ENCODE measurements at regions of chr5 and their contacts with region 1.

Region 1: GRCh38 chr5:33969572-33970452 is 14.7 kb downstream of the SLC45A2 start:
- DNase-seq: peak; percentile 71
- CTCF ChIP-seq: peak; percentile 91

Region 2: DNA sequence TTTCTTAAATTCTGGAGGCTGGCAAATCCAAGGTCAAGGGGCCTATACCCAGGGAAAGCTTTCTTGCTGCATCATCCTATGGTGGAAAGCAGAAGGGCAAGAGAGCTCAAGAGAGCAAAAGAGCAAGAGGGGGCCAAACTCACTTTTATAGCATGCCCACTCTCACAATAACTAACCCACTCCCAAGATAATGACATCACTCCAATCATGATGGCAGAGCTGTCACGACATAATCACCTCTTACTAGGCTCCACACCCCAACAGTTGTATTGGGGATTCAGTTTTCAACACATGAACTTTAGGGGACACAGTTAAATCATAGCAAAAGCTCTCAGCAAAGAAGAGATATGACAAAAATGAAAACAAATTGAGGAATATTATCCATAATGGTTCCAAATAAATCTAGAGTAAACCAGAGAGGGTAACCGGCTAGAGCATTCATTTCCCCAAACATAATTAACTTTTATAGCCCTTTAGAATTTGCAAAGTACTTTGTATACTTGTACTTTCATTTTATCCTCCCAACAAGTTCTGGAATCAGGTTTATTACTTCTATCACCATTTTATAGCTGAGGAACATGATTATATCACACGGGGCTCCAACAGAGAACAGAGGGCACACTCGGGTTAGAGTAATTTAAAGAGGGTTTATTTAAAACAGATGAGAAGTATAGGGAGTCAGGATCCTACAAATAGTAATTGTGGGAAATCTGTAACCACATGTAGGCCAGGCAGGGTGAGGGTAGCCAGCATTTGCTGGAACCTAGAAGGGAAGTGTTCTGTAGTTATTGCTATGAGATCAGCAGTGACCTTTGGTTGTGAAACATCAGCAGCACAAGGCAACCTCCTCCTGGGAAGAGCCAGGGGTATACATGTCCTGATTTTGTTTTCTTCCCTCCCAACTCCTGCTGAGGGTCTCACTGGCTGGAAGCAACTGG is 536.2 kb before region 1 on chr5:
- CTCF ChIA-PET with region 1: interaction called, 37 read pairs
- POLR2A ChIA-PET with region 1: no interaction called
- DNase-seq: no peak
- CTCF ChIP-seq: no peak

Region 3: DNA sequence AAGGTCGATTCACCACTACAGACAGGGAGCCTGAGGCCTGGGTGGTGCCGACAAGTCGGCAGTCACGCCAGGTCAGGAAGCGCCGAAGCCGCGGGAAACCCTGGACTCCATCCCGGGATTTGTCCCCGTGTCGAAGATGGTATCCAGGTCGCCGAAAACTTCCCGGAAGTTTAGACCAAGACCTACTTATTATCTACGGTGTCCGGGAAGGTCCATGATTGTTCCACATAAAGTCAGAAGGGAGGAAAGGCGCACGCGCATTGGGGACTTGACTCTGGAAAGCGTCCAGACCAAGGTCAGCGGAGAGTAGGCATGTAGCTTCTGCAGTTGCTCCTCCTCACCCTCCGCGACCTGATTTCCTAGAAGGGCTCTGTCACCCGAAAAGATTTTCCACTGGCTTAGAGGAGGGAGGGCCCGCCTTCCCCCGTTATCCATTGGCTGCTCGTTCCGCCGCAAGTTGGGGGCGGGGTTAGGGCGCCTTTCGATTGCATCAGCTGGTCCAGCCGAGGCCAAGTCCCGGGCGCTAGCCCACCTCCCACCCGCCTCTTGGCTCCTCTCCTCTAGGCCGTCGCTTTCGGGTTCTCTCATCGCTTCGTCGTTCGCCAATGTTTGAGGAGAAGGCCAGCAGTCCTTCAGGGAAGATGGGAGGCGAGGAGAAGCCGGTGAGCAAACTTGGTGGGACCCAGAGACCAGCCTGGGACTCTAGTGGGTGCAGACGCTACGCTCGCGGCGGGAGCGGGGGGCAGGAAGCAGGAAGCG is 529.2 kb before region 1 on chr5 and contains the start of gene TARS1:
- CTCF ChIA-PET with region 1: interaction called, 37 read pairs
- POLR2A ChIA-PET with region 1: no interaction called
- DNase-seq: peak; percentile 96
- CTCF ChIP-seq: no peak

Region 4: DNA sequence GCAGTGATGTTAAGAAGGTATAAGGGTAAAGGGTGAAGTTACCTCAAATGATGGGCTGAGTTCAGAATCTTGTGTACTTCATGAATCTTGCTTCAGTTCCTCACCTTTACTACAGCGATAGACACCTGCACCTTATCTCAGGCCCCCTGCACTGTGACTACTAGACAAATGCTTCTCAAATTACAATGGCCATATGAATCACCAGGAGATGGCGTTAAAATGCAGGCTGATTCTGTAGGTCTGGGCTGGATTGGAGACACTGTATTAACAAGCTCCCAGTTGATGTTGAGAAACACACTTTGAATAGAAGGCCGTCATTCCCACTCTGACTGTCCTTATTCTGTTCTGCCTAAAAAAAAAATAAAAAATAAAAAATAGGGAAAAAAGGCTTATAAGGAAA is 499.3 kb before region 1 on chr5:
- CTCF ChIA-PET with region 1: interaction called, 12 read pairs
- POLR2A ChIA-PET with region 1: no interaction called
- DNase-seq: no peak
- CTCF ChIP-seq: peak; percentile 43

Region 5: DNA sequence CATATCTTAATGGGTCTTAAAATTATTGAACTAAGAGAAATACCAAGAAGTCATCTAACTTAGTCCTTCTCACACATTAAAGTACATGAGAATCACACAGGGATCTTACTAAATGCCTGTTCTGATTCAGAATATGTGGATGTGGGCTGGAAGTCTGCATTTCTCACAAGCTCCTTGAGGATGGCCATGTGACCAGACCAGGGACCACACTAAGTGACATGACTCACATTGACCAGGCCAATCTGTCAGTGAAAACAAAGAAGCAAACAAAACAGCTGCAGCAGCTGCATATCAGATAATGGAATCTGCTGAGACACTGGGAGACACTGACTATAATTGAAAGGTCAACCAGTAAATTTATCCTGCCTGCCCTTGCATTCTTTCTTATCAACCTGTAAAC is 188.5 kb before region 1 on chr5:
- CTCF ChIA-PET with region 1: no interaction called
- POLR2A ChIA-PET with region 1: no interaction called
- DNase-seq: no peak
- CTCF ChIP-seq: no peak

Region 6: DNA sequence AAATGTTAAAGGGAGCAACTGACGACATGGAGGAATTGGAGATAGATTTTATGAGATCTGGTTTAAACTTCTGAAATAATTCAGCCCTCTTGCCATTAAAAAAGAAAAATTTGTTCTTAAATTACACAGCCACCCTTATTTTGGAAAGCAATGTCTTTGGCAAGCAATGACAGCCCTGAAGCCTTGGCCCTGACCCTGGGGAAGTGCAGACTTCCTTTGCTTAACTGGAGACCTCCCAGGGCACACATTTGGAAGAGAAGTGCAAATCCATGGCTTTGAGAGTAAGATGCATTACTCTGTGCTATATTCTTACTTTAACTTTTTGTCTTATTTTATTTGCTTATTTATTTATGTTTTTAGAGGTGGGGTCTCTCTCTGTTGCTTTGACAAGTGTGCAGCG is 11.6 kb before region 1 on chr5:
- CTCF ChIA-PET with region 1: interaction called, 40 read pairs
- POLR2A ChIA-PET with region 1: no interaction called
- DNase-seq: no peak
- CTCF ChIP-seq: no peak

Region 7: DNA sequence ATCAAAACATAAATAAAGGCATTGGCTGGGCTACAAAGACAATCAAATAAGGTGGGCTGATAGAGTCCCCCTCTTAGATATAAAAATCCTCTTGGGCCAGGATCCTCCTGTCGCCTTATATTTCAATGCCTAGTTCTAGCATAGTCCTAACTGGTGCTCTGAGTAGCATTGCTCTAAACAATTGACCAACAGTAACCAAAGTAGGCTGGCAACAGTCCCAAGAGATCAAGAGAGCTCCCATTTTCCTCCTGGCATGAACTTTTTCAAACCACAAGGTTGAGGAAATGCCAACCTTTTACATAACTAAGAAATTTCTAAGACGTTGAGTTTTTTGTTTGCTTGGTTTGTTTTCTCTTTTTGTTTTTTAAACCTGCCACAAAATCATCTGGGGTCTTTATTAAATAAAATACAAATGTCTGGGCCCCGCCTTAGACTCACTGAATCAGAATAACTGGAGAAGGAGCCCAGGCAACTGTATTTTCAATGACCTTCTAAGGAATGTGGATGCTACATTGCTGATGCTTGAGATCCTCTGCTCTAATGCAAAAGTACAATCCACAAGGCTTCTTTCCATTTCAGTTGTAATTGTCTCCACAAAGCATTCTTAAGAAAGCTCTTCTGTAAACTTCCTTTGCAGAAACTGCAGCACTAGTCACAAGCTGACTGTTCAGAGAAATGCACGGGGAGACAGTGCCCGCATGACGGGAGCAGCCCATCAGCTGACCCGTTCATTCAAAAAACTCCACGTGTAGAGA is 11.8 kb after region 1 on chr5:
- CTCF ChIA-PET with region 1: interaction called, 38 read pairs
- POLR2A ChIA-PET with region 1: no interaction called
- DNase-seq: no peak
- CTCF ChIP-seq: no peak

Region 8: GRCh38 chr5:33997331-33997983 is 27.6 kb after region 1 on chr5:
- CTCF ChIA-PET with region 1: interaction called, 34 read pairs
- POLR2A ChIA-PET with region 1: no interaction called
- DNase-seq: peak; percentile 33
- CTCF ChIP-seq: peak; percentile 51